Sigmoid colon (tissue), 7 donors: ENCODE measurements at regions of chr1 and their contacts with region 1.

Region 1: GRCh38 chr1:153510984-153511410 is 24.8 kb downstream of the S100A6 start:
- DNase-seq: peak; percentile 88
- H3K4me3 ChIP-seq: no peak overlapping the region
- H3K27ac ChIP-seq: peak overlapping the region in 2 of 4 donors; percentile 4 to 38
- H3K4me1 ChIP-seq: peaks cover 0 to 31% (median 25%) of the 10 kb centered on the region in 4 donors
- H3K27me3 ChIP-seq: no peaks in the 10 kb centered on the region
- CTCF ChIP-seq: peak; percentile 80 to 91 (median 88)
- EP300 ChIP-seq: no peak
- POLR2A ChIP-seq: no peak

Region 2: DNA sequence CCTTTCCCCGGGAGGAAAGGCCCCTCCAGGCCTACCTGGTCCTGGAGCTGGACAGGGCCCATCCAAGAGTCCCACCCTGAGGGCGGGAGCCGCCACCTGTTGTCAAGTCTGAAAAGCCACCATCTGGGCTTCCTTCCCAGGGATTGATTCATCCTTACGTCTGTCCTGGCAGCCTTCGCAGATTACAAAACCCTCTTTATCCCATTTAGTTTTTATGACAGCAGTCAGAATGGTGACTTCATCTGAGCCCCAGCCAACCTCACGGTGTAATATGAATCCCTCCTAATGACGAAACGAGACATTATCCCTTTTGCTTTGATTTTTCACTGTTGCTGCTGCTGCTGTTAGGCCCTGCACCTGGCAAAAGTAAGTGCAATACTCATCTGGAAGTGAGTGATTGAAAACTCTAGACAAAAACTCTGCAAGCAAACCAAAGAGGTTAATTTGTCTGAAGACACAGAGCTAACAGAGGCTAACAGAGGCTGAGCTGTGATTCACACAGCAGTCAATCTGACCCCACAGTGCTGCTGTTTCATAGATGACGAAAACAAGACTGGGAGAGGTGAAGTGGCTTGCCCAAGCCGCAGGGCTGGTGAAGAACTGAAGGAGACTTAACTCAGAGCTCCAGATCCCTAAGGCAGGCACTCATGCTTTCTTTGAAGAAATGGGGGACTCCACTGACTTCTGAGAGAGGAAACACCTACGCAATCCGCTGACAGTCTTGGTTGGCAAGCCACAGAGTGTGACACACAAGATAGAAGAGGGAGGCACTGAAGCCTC is 20.5 kb before region 1 on chr1:
- intact Hi-C with region 1: no loop called
- DNase-seq: peak; percentile 95
- H3K4me3 ChIP-seq: no peak overlapping the region
- H3K27ac ChIP-seq: peak overlapping the region; percentile 68 to 84 (median 70)
- H3K4me1 ChIP-seq: peaks cover 0 to 57% (median 37%) of the 10 kb centered on the region in 4 donors
- H3K27me3 ChIP-seq: no peaks in the 10 kb centered on the region
- CTCF ChIP-seq: no peak
- EP300 ChIP-seq: peak in 1 of 4 donors; percentile 27
- POLR2A ChIP-seq: no peak

Region 3: DNA sequence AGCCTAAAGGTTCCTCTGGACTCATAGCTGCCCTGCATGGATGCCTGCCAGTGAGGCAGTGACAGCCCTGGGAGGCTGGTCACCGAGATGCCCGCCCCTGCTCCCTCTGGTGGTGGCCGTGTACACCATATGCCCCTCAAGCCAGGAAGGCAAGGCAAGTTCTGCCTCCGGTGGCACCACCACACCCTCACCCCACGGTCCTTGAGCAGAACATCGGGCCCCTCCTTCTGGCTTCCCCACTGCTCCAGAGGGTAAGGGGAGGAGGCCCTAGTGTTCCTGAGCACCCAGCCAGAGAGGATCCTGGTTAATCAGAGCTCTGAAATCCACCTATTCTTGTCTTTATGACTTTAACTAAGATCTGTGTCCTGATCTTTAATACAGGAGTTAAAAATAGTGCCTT is 106.7 kb after region 1 on chr1:
- intact Hi-C with region 1: loop called (anchors 5 kb)
- DNase-seq: peak; percentile 90
- H3K4me3 ChIP-seq: no peak overlapping the region
- H3K27ac ChIP-seq: peak overlapping the region in 3 of 4 donors; percentile 5 to 10 (median 7)
- H3K4me1 ChIP-seq: peaks cover 0 to 29% (median 17%) of the 10 kb centered on the region in 4 donors
- H3K27me3 ChIP-seq: no peaks in the 10 kb centered on the region
- CTCF ChIP-seq: peak in 2 of 4 experiments; percentile 31 to 39
- EP300 ChIP-seq: no peak
- POLR2A ChIP-seq: no peak

Region 4: GRCh38 chr1:153749408-153750005 is 238.5 kb after region 1 on chr1:
- intact Hi-C with region 1: loop called (anchors 5 kb)
- DNase-seq: peak; percentile 95
- H3K4me3 ChIP-seq: no peak overlapping the region
- H3K27ac ChIP-seq: peak overlapping the region; percentile 45 to 68 (median 52)
- H3K4me1 ChIP-seq: peaks cover 0 to 60% (median 11%) of the 10 kb centered on the region in 4 donors
- H3K27me3 ChIP-seq: no peaks in the 10 kb centered on the region
- CTCF ChIP-seq: peak; percentile 82 to 90 (median 88)
- EP300 ChIP-seq: no peak
- POLR2A ChIP-seq: no peak